Heart left ventricle (tissue), 16 donors: ENCODE measurements at regions of chr12 and their contacts with region 1.

Region 1: GRCh38 chr12:10511756-10512355 is 6.2 kb downstream of the EIF2S3B start:
- DNase-seq: no peak
- ATAC-seq: no peak
- H3K4me3 ChIP-seq: no peak overlapping the region
- H3K27ac ChIP-seq: no peak overlapping the region
- H3K4me1 ChIP-seq: no peaks in the 10 kb centered on the region
- H3K27me3 ChIP-seq: no peaks in the 10 kb centered on the region
- CTCF ChIP-seq: no peak
- POLR2A ChIP-seq: no peak

Region 2: GRCh38 chr12:10528174-10528953 is 16.5 kb after region 1 on chr12:
- intact Hi-C with region 1: loop called in 1 of 10 experiments (anchors 2 kb)
- DNase-seq: no peak
- ATAC-seq: no peak
- H3K4me3 ChIP-seq: no peak overlapping the region
- H3K27ac ChIP-seq: no peak overlapping the region
- H3K4me1 ChIP-seq: no peaks in the 10 kb centered on the region
- H3K27me3 ChIP-seq: peaks cover 0 to 4% (median 0%) of the 10 kb centered on the region in 9 donors
- CTCF ChIP-seq: no peak
- POLR2A ChIP-seq: no peak